ENCODE measurements at regions of chr19 and their contacts with region 1.

Region 1: GRCh38 chr19:40465557-40466150 is at the start of gene BLVRB:
- DNase-seq: peak; percentile 100
- H3K4me3 Mint-ChIP-seq: peak within 1 kb of the TSS; percentile 76
- H3K27ac Mint-ChIP-seq: peak within 1 kb of the TSS; percentile 68
- H3K4me1 Mint-ChIP-seq: peaks cover 31% of the 10 kb centered on the region
- H3K27me3 Mint-ChIP-seq: peaks cover 10% of the 10 kb centered on the region
- total RNA-seq, gene BLVRB: 34.6 to 37.6 TPM

Region 2: GRCh38 chr19:40139533-40140287 is 325.9 kb before region 1 on chr19:
- CTCF ChIA-PET with region 1: no interaction called
- POLR2A ChIA-PET with region 1: no interaction called
- intact Hi-C with region 1: no loop called
- DNase-seq: no peak
- H3K4me3 Mint-ChIP-seq: peak overlapping the region; percentile 28
- H3K27ac Mint-ChIP-seq: peak overlapping the region; percentile 38
- H3K4me1 Mint-ChIP-seq: peaks cover 13% of the 10 kb centered on the region
- H3K27me3 Mint-ChIP-seq: peaks cover 3% of the 10 kb centered on the region

Region 3: GRCh38 chr19:40381321-40381720 is 84.3 kb before region 1 on chr19:
- CTCF ChIA-PET with region 1: no interaction called
- POLR2A ChIA-PET with region 1: no interaction called
- intact Hi-C with region 1: no loop called
- DNase-seq: no peak
- H3K4me3 Mint-ChIP-seq: no peak overlapping the region
- H3K27ac Mint-ChIP-seq: no peak overlapping the region
- H3K4me1 Mint-ChIP-seq: no peaks in the 10 kb centered on the region
- H3K27me3 Mint-ChIP-seq: no peaks in the 10 kb centered on the region

Region 4: GRCh38 chr19:40392872-40393845 is 72.5 kb before region 1 on chr19:
- CTCF ChIA-PET with region 1: no interaction called
- POLR2A ChIA-PET with region 1: no interaction called
- intact Hi-C with region 1: no loop called
- DNase-seq: no peak
- H3K4me3 Mint-ChIP-seq: no peak overlapping the region
- H3K27ac Mint-ChIP-seq: no peak overlapping the region
- H3K4me1 Mint-ChIP-seq: no peaks in the 10 kb centered on the region
- H3K27me3 Mint-ChIP-seq: no peaks in the 10 kb centered on the region

Region 5: GRCh38 chr19:40403262-40403984 is 62.2 kb before region 1 on chr19:
- CTCF ChIA-PET with region 1: interaction called, 3 read pairs
- POLR2A ChIA-PET with region 1: no interaction called
- intact Hi-C with region 1: loop called (anchors 10 kb)
- DNase-seq: peak; percentile 95
- H3K4me3 Mint-ChIP-seq: peak overlapping the region; percentile 78
- H3K27ac Mint-ChIP-seq: peak overlapping the region; percentile 16
- H3K4me1 Mint-ChIP-seq: peaks cover 20% of the 10 kb centered on the region
- H3K27me3 Mint-ChIP-seq: no peaks in the 10 kb centered on the region

Region 6: DNA sequence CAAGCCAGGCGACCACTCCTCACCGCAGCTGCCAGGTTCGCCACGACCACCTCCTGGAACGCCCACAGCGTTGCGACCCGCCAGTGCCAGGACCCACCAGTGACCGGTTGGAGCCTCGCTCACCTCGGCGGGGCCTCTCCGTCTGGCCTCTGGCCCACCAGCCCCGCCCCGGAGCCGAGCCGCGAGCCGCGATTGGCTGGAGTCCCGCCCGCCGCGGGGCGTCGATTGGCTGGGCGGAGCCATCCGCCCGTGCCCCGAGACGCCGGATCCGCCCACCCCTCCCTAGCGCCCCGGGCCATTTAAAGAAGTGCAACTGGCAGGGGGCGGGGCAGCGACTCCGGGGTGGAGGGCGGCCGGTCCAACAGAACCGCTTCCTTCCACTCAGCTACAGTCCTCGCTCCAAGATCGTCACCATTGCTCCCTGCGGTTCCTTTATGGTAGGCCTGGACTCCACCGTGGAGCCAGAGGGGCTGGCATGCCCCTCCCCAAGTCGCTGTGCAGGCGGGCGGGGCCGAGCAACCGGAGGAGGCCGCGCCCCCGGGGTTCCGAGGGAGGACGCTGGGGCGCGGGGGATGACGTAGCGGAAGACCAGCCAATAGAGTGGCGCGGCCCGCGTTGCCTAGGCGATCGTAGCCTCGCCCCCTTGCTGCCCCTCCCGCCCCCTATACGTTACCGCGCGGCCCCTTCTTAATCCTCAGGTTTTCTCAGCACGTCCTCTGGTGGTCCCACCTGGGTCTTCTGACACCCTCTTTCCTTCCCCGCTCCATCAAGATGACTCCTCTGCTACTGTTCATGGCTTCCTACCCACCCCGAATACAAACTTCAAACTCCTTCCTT is 21.2 kb before region 1 on chr19 and contains the start of gene SERTAD3:
- CTCF ChIA-PET with region 1: interaction called, 32 read pairs
- POLR2A ChIA-PET with region 1: interaction called, 20 read pairs
- intact Hi-C with region 1: loop called (anchors 1 kb)
- DNase-seq: peak; percentile 97
- H3K4me3 Mint-ChIP-seq: peak within 1 kb of the TSS; percentile 97
- H3K27ac Mint-ChIP-seq: peak within 1 kb of the TSS; percentile 92
- H3K4me1 Mint-ChIP-seq: peaks cover 14% of the 10 kb centered on the region
- H3K27me3 Mint-ChIP-seq: no peaks in the 10 kb centered on the region
- total RNA-seq, gene SERTAD3: 12.1 to 13.1 TPM

Region 7: GRCh38 chr19:40529093-40529954 is 63.7 kb after region 1 on chr19:
- CTCF ChIA-PET with region 1: no interaction called
- POLR2A ChIA-PET with region 1: no interaction called
- intact Hi-C with region 1: loop called (anchors 10 kb)
- DNase-seq: peak; percentile 94
- H3K4me3 Mint-ChIP-seq: peak overlapping the region; percentile 51
- H3K27ac Mint-ChIP-seq: peak overlapping the region; percentile 4
- H3K4me1 Mint-ChIP-seq: peaks cover 11% of the 10 kb centered on the region
- H3K27me3 Mint-ChIP-seq: peaks cover 18% of the 10 kb centered on the region

Region 8: DNA sequence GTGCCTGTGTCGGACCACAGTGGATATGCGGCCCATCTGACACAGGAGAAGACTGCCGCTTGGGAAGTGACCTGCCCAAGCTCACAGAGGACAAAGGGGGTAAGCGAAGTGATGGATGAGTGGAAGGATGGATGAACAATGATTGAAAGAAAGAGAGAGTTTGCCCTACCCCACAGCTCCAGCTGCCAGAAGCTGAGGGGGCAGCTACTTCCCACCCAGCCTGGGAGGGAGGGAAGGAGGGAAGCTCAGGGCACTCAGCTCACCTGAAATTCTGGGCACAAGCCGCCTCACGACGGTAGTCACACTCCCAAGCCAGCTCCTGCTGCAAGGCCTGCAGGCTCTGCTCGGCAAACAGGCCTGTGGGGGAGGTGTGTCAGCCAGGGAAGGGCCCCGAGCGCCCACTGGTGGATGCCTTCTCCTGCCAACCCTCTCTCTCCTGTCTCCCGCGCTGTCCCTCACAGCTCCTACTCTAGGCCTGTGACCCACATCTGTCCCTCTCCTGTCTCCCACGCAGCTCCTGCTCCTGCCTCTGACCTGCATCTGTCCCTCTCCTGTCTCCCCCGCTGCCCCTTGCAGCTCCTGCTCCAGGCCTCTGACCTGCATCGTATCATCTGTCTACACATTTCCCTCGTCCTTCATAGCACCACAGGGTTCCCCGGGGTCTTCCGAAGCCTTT is 236.8 kb after region 1 on chr19:
- CTCF ChIA-PET with region 1: no interaction called
- POLR2A ChIA-PET with region 1: no interaction called
- intact Hi-C with region 1: no loop called
- DNase-seq: no peak
- H3K4me3 Mint-ChIP-seq: no peak overlapping the region
- H3K27ac Mint-ChIP-seq: no peak overlapping the region
- H3K4me1 Mint-ChIP-seq: no peaks in the 10 kb centered on the region
- H3K27me3 Mint-ChIP-seq: no peaks in the 10 kb centered on the region

Region 9: GRCh38 chr19:40750059-40750873 is 284.6 kb after region 1 on chr19 and contains the start of gene ACTMAP:
- CTCF ChIA-PET with region 1: no interaction called
- POLR2A ChIA-PET with region 1: no interaction called
- intact Hi-C with region 1: loop called (anchors 10 kb)
- DNase-seq: peak; percentile 100
- H3K4me3 Mint-ChIP-seq: peak within 1 kb of the TSS; percentile 94
- H3K27ac Mint-ChIP-seq: peak within 1 kb of the TSS; percentile 97
- H3K4me1 Mint-ChIP-seq: peaks cover 32% of the 10 kb centered on the region
- H3K27me3 Mint-ChIP-seq: no peaks in the 10 kb centered on the region
- total RNA-seq, gene ACTMAP: 14.1 to 15.8 TPM

Measured in activated CD4-positive, alpha-beta memory T cell treated with anti-CD3 and anti-CD28 coated beads for 36 hours (primary cell).